ENCODE measurements at regions of chr16 and their contacts with region 1.

Region 1: DNA sequence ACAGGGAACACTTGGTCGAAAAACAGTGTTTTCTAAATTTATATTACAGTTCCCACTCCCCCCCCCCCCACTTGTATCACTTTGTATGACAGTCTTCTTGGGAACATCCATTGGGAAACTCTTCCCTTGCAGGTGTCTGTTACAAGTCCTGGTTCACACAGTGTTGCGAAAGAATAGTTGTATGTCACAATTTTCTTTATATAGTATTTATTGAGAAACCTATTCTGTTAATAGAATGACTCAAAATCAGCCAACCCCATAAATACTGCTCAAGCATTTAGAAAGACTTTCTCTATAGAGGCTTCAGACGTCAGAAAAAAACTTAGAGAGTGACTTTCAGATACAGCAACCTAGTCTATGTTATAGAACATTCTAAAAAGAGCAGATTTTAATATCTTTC is 414.4 kb downstream of the WWOX start:
- DNase-seq: no peak
- ATAC-seq: no peak
- H3K4me3 ChIP-seq: no peak overlapping the region
- H3K27ac ChIP-seq: no peak overlapping the region
- H3K4me1 ChIP-seq: no peaks in the 10 kb centered on the region
- H3K27me3 ChIP-seq: no peaks in the 10 kb centered on the region
- CTCF ChIP-seq: no peak

Region 2: DNA sequence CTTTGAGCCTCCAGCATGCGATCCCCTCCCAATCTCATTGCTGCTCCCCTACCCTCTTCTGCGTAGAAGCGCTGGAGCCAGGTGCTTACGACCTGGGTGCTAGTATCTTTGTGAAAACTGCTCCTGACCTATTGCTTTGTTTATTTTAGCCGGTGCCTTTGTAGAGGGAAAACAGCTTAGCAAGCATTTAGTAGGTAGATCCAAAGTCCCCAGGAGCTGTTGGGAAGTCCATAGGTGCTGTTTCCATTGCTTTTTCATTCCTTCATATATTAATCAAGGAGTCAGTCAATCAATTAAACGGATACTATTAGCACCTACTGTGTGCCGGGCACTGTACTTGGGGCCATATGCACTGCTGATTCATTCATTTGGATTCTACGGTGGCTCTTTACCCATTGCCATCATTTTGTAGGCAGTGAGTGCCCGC is 83.2 kb after region 1 on chr16:
- intact Hi-C with region 1: loop called in 2 of 10 experiments (anchors 10 kb)
- DNase-seq: no peak
- ATAC-seq: no peak
- H3K4me3 ChIP-seq: no peak overlapping the region
- H3K27ac ChIP-seq: no peak overlapping the region
- H3K4me1 ChIP-seq: peaks cover 0 to 3% (median 0%) of the 10 kb centered on the region in 9 donors
- H3K27me3 ChIP-seq: no peaks in the 10 kb centered on the region
- CTCF ChIP-seq: no peak

Region 3: GRCh38 chr16:78669994-78670393 is 156.2 kb after region 1 on chr16:
- intact Hi-C with region 1: loop called in 1 of 10 experiments (anchors 10 kb)
- DNase-seq: peak; percentile 42 to 77
- ATAC-seq: peak in 7 of 8 donors; percentile 88 to 95 (median 93)
- H3K4me3 ChIP-seq: no peak overlapping the region
- H3K27ac ChIP-seq: peak overlapping the region in 8 of 10 donors; percentile 57 to 85 (median 70)
- H3K4me1 ChIP-seq: peaks cover 0 to 25% (median 16%) of the 10 kb centered on the region in 9 donors
- H3K27me3 ChIP-seq: no peaks in the 10 kb centered on the region
- CTCF ChIP-seq: peak in 1 of 9 donors; percentile 15

Measured in heart right ventricle (tissue), 16 donors.